RWPE1 (cell line): ENCODE measurements at regions of chr10 and their contacts with region 1.

Region 1: GRCh38 chr10:94320285-94320914 is 42.3 kb downstream of the NOC3L start:
- DNase-seq: peak; percentile 55
- H3K27ac ChIP-seq: no peak overlapping the region
- CTCF ChIP-seq: peak; percentile 81

Region 2: DNA sequence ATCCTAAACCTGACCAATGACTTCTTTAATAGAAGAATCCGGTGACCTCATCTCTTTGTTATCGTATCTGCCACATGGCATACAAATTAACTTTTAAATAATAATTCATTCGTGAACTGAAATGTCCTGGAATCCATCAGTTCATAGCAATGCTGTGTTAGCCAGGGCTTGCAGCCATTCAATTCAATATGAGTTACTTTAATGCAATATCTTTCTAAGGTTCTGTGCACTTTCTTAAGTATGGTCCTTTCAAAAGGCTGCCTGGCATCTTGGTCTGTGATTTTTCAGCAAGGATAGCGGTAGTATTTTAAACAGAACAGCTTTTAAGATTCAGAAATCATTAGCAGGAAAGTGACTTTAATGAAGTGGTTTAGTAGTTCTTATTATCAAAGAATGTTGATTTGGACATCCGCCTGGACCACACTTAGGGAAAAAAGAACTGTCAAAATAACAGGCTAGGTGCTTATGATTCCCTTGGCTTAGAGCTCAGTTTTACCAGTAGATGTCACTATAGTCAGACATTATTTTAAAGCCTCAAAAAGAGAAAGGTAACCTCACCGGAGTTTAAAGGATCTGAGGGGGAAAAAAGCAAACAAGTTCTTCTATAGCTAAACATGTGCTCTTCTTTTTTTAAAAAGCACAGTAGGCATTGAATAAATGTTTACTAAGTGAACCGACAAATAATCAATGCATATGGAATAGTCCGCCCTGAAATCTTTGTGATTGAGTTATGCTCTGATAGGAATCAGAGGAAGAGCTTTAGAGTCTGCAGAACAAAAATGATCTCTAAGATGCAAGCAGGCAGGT is 403.9 kb before region 1 on chr10:
- CTCF ChIA-PET with region 1: interaction called, 45 read pairs
- POLR2A ChIA-PET with region 1: interaction called, 3 read pairs
- DNase-seq: peak; percentile 47
- H3K27ac ChIP-seq: no peak overlapping the region
- CTCF ChIP-seq: peak; percentile 79

Region 3: GRCh38 chr10:94333051-94333450 is 12.7 kb after region 1 on chr10:
- CTCF ChIA-PET with region 1: interaction called, 10 read pairs
- POLR2A ChIA-PET with region 1: no interaction called
- DNase-seq: no peak
- H3K27ac ChIP-seq: no peak overlapping the region
- CTCF ChIP-seq: no peak